HCT116 (cell line): ENCODE measurements at regions of chr3 and their contacts with region 1.

Region 1: GRCh38 chr3:17686613-17687012 is 55.8 kb downstream of the TBC1D5 start:
- DNase-seq: peak; percentile 16
- ATAC-seq: peak; percentile 84
- H3K4me3 ChIP-seq: no peak overlapping the region
- H3K27ac ChIP-seq: no peak overlapping the region
- H3K4me1 ChIP-seq: no peaks in the 10 kb centered on the region
- H3K27me3 ChIP-seq: no peaks in the 10 kb centered on the region
- CTCF ChIP-seq: peak; percentile 40 to 56 (median 48); a peak in 4 of 6 replicates
- POLR2A ChIP-seq: no peak
- RAD21 ChIP-seq: peak; percentile 72

Region 2: DNA sequence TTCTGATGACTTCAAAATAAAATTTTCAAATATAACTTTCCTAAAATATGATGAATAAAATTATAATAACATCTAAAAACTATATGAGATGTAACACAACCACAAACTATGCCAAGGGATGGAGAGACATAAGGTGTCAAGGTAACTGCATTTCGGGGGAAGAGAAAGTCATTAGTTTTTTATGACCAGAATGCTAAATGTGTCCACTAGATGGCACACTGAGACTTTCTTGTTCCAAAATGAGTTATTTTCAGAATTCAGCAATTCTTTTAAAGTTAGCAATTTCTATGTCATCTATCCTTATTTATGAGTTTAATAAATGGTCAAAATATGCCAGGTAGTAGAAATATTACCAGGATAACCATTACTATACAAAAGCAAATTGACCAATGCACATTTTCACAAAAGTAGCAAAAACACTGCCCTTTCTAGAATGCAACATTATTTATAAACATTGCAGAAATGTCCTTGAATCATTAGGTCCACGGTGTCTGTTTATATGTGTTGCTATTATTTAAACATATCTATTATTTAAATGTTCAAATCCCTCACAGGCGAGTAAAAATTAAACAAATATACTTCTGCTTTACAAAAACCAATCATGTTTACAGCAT is 427.7 kb before region 1 on chr3:
- CTCF ChIA-PET with region 1: no interaction called
- POLR2A ChIA-PET with region 1: no interaction called
- RAD21 ChIA-PET with region 1: no interaction called
- intact Hi-C with region 1: loop called (anchors 5 kb)
- DNase-seq: peak; percentile 13
- ATAC-seq: no peak
- H3K4me3 ChIP-seq: no peak overlapping the region
- H3K27ac ChIP-seq: no peak overlapping the region
- H3K4me1 ChIP-seq: no peaks in the 10 kb centered on the region
- H3K27me3 ChIP-seq: no peaks in the 10 kb centered on the region
- CTCF ChIP-seq: peak; percentile 46 to 69 (median 69); a peak in 5 of 6 replicates
- POLR2A ChIP-seq: no peak
- RAD21 ChIP-seq: peak; percentile 68

Region 3: GRCh38 chr3:17431004-17431403 is 255.6 kb before region 1 on chr3:
- CTCF ChIA-PET with region 1: no interaction called
- POLR2A ChIA-PET with region 1: no interaction called
- RAD21 ChIA-PET with region 1: no interaction called
- intact Hi-C with region 1: loop called (anchors 1 kb)
- DNase-seq: peak; percentile 19
- ATAC-seq: peak; percentile 79
- H3K4me3 ChIP-seq: no peak overlapping the region
- H3K27ac ChIP-seq: no peak overlapping the region
- H3K4me1 ChIP-seq: no peaks in the 10 kb centered on the region
- H3K27me3 ChIP-seq: no peaks in the 10 kb centered on the region
- CTCF ChIP-seq: peak; percentile 33 to 52 (median 44); a peak in 3 of 6 replicates
- POLR2A ChIP-seq: no peak
- RAD21 ChIP-seq: peak; percentile 72

Region 4: GRCh38 chr3:17544632-17545031 is 142.0 kb before region 1 on chr3:
- CTCF ChIA-PET with region 1: no interaction called
- POLR2A ChIA-PET with region 1: no interaction called
- RAD21 ChIA-PET with region 1: interaction called in 1 of 2 experiments, 3 read pairs
- intact Hi-C with region 1: loop called (anchors 10 kb)
- DNase-seq: no peak
- ATAC-seq: no peak
- H3K4me3 ChIP-seq: no peak overlapping the region
- H3K27ac ChIP-seq: no peak overlapping the region
- H3K4me1 ChIP-seq: no peaks in the 10 kb centered on the region
- H3K27me3 ChIP-seq: no peaks in the 10 kb centered on the region
- CTCF ChIP-seq: peak in 2 of 3 experiments; percentile 11 to 36; a peak in 3 of 6 replicates
- POLR2A ChIP-seq: no peak
- RAD21 ChIP-seq: peak; percentile 36; the same call in 1 of the 2 replicates